ENCODE measurements at regions of chr6 and their contacts with region 1.

Region 1: GRCh38 chr6:148926478-148926877 is 179.6 kb downstream of the UST start:
- DNase-seq: no peak
- ATAC-seq: peak in 3 of 4 donors; percentile 63 to 88 (median 87)
- H3K4me3 ChIP-seq: no peak overlapping the region
- H3K27ac ChIP-seq: no peak overlapping the region
- H3K4me1 ChIP-seq: no peaks in the 10 kb centered on the region
- H3K27me3 ChIP-seq: no peaks in the 10 kb centered on the region
- CTCF ChIP-seq: no peak
- POLR2A ChIP-seq: no peak

Region 2: DNA sequence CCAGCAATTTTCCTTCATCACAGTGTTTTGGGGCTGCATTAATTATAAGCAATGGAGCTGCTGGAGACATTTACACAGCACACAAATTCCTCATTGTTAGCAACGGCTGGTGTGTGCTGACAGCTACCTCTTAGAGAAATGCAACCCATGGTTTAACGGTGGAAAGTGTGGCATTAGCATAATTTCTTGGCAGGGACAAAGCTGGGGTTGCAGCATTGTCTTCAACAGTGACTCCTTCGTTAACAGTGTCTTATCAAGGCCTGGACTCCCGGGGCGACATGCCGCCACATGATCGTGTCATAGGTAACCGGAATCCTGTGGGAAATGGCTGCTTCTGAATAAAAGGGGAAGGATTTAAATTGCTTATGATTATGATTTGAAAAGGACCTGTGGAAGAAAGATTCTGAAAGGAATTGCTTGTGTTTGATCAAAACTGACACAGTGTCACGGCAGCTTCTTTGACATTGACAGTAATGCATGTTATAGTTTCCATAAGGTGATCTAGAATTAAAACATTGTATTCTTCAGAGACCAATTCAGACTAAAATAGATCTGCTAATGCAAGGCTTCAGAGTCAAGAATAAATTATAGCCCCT is 51.7 kb before region 1 on chr6:
- intact Hi-C with region 1: loop called in 1 of 10 experiments (anchors 5 kb)
- DNase-seq: peak in 4 of 5 donors; percentile 10 to 58 (median 42)
- ATAC-seq: peak; percentile 86 to 96 (median 90)
- H3K4me3 ChIP-seq: peak overlapping the region in 3 of 12 donors; percentile 12 to 20 (median 12)
- H3K27ac ChIP-seq: peak overlapping the region in 2 of 12 donors; percentile 17 to 36
- H3K4me1 ChIP-seq: peaks cover 0 to 13% (median 1%) of the 10 kb centered on the region in 12 donors
- H3K27me3 ChIP-seq: no peaks in the 10 kb centered on the region
- CTCF ChIP-seq: no peak
- POLR2A ChIP-seq: no peak

Measured in heart left ventricle (tissue), 16 donors.